Esophagus squamous epithelium (tissue), 5 donors: ENCODE measurements at regions of chr3 and their contacts with region 1.

Region 1: DNA sequence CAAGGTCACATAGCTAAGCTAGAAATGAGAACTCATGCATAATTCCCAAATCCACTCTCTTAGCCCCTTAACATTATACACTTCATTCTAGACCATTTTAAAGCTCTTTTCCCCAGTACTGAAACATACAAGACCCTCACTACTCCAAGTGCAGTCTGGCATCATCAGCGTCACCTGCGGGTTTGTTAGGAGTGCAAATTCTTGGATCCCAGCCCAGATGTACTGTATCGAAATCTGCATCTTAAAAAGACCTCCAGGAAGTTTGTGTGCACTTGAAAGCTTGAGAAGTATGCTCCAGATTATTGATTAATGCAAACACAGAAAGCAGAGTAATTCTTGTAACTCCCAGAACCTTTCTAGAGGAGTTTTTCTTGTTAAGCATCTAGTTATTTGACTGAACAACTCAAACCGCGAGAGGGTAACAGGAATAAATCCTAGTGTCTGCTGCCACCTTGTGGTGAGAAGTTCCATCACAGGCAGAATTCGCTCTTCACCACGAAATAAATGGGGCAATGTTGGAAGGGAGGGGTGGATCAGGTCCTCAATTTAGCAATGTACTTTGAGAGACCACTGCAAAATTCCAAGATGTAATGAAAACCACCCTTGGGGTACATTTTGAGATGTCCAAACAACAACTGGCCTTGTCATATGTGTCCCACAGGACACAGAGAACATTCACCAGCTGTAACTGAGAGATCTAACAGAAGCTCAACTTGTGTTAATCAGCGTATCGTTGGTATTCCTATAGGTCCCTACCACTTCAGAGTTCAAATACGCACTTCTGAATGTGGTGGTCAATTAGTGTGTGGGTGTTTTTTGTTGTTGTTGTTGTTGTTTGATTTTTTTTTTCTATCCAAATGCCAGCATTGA is 583 bp upstream of the C3orf49 start:
- DNase-seq: no peak
- H3K4me3 ChIP-seq: no peak overlapping the region
- H3K27ac ChIP-seq: no peak overlapping the region
- H3K4me1 ChIP-seq: peaks cover 0 to 6% (median 0%) of the 10 kb centered on the region in 3 donors
- H3K27me3 ChIP-seq: no peaks in the 10 kb centered on the region
- CTCF ChIP-seq: peak; percentile 79 to 90 (median 87)
- POLR2A ChIP-seq: no peak

Region 2: GRCh38 chr3:63349583-63350521 is 468.7 kb before region 1 on chr3:
- intact Hi-C with region 1: loop called (anchors 5 kb)
- DNase-seq: no peak
- H3K4me3 ChIP-seq: no peak overlapping the region
- H3K27ac ChIP-seq: no peak overlapping the region
- H3K4me1 ChIP-seq: peaks cover 0 to 1% (median 0%) of the 10 kb centered on the region in 3 donors
- H3K27me3 ChIP-seq: peaks cover 0 to 52% (median 0%) of the 10 kb centered on the region in 4 donors
- CTCF ChIP-seq: peak in 5 of 6 experiments; percentile 56 to 75 (median 70)
- POLR2A ChIP-seq: no peak

Region 3: GRCh38 chr3:63565220-63565619 is 253.3 kb before region 1 on chr3:
- intact Hi-C with region 1: no loop called
- DNase-seq: no peak
- H3K4me3 ChIP-seq: no peak overlapping the region
- H3K27ac ChIP-seq: no peak overlapping the region
- H3K4me1 ChIP-seq: no peaks in the 10 kb centered on the region
- H3K27me3 ChIP-seq: no peaks in the 10 kb centered on the region
- CTCF ChIP-seq: no peak
- POLR2A ChIP-seq: no peak